ENCODE measurements at regions of chr6 and their contacts with region 1.

Region 1: GRCh38 chr6:72622094-72622940 is 453 bp downstream of the KCNQ5 start:
- DNase-seq: peak; percentile 85
- H3K4me3 Mint-ChIP-seq: peak overlapping the region; percentile 98
- H3K27ac Mint-ChIP-seq: peak overlapping the region; percentile 97
- H3K4me1 Mint-ChIP-seq: peaks cover 52% of the 10 kb centered on the region
- H3K27me3 Mint-ChIP-seq: no peaks in the 10 kb centered on the region

Region 2: GRCh38 chr6:72246926-72247325 is 375.4 kb before region 1 on chr6:
- intact Hi-C with region 1: no loop called
- DNase-seq: no peak
- H3K4me3 Mint-ChIP-seq: no peak overlapping the region
- H3K27ac Mint-ChIP-seq: no peak overlapping the region
- H3K4me1 Mint-ChIP-seq: no peaks in the 10 kb centered on the region
- H3K27me3 Mint-ChIP-seq: no peaks in the 10 kb centered on the region

Region 3: DNA sequence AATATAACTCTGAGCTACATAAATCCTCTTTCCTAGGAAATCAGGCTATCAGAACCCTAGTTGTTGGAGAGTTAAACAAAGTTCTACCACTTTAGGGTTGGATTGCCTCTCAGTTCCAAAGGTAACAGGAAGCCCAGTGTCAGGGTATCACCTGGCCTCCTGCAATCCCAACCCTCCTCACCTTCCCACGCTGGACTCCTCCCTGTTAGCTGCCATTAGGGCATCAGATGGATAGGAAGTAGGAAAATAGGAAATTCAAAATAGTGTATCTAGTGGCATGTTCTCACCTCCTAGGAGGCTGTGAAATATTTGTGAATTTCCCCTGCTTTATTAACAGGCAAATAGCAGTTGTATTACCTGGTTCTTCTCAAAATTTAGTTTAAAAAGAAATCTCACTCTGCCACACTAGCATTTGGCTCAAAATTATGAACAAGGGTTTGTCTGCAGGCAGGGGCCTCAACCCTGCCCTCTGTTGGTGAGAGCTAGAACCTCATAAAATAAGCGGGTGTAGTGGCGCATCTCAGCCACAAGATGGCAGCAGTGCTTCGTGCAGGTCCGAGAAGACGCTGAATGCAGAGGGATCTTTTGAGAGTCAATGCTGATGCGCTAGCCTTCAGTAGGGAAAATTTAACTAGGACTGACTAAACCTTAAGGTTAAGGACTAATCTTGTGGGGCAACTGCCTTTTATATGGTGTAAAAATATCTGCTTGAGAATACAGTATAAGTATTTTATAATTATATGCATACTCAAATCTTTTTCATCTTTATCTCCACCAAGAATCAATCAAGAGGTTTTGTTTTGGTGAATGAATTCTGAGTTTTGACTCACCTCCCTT is 210.2 kb before region 1 on chr6:
- intact Hi-C with region 1: loop called (anchors 2 kb)
- DNase-seq: peak; percentile 94
- H3K4me3 Mint-ChIP-seq: no peak overlapping the region
- H3K27ac Mint-ChIP-seq: no peak overlapping the region
- H3K4me1 Mint-ChIP-seq: no peaks in the 10 kb centered on the region
- H3K27me3 Mint-ChIP-seq: peaks cover 4% of the 10 kb centered on the region

Region 4: GRCh38 chr6:72683797-72684196 is 61.5 kb after region 1 on chr6:
- intact Hi-C with region 1: loop called (anchors 2 kb)
- DNase-seq: no peak
- H3K4me3 Mint-ChIP-seq: no peak overlapping the region
- H3K27ac Mint-ChIP-seq: peak overlapping the region; percentile 20
- H3K4me1 Mint-ChIP-seq: peaks cover 7% of the 10 kb centered on the region
- H3K27me3 Mint-ChIP-seq: no peaks in the 10 kb centered on the region

Region 5: DNA sequence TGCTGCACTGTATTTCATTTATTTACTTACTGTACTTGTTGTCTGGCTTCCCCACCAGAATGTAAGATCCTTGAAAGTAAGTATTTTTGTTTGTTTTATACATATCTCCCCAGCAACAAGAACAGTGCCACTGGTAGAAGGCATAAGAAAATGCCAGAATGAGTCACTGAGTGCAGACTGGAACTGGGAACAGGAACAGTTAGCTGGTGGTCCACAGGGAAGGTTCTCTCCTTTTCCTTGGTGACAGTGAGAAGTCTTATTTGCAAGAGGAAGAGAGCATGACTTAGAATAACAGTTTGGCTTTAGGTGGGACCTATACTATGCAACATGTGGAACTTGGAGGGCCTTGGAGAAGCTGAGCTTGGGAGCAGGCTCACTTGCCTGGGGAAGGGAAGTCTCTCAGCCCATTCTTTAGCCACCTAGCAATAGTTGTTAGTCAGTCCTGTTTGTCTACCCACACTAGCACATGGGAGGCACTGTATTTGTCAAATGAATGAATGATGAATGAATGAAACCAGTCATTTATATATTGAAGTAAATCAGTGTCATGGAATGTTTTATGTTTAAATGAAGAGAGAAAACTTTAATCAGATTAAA is 203.1 kb after region 1 on chr6:
- intact Hi-C with region 1: loop called (anchors 1 kb)
- DNase-seq: no peak
- H3K4me3 Mint-ChIP-seq: no peak overlapping the region
- H3K27ac Mint-ChIP-seq: peak overlapping the region; percentile 81
- H3K4me1 Mint-ChIP-seq: peaks cover 15% of the 10 kb centered on the region
- H3K27me3 Mint-ChIP-seq: no peaks in the 10 kb centered on the region

Region 6: DNA sequence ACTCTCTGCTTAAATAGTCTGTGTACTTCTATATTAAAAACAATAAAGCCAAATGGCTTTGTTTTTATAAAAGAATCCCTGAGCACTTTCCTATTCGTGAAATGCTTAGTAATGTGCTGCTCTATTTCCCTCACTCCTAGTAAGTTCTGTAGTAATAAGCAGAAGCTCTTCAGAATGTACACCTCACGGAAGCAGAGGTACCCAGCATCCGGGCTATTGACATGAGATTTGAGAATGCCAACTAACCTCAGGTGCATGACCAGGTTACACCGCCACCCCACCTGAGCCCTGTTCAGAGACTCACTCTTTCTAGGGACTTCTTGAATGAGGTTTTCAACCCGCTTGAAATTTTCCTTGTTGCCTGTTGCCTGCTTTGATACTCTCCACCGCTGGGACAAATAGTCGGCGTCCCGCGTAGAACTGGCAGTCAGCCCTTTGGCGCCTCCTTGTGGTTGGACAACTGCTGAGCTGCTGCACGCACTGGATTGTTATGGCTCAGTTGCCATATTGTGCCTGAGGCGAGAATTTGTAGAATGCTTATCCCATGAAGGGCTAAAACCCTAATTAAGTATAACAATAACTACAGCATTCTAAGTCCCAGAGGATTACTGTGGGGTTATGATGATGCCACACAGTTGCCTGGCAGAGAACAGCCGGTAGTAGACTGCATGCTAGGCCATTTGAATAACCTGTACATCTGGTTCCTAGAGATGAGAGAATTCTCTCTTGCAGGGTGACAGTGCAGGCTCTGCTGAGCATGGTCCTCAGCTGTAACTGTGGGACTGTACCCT is 507.5 kb after region 1 on chr6:
- intact Hi-C with region 1: loop called (anchors 1 kb)
- DNase-seq: peak; percentile 95
- H3K4me3 Mint-ChIP-seq: peak overlapping the region; percentile 18
- H3K27ac Mint-ChIP-seq: no peak overlapping the region
- H3K4me1 Mint-ChIP-seq: peaks cover 4% of the 10 kb centered on the region
- H3K27me3 Mint-ChIP-seq: peaks cover 3% of the 10 kb centered on the region

Region 7: DNA sequence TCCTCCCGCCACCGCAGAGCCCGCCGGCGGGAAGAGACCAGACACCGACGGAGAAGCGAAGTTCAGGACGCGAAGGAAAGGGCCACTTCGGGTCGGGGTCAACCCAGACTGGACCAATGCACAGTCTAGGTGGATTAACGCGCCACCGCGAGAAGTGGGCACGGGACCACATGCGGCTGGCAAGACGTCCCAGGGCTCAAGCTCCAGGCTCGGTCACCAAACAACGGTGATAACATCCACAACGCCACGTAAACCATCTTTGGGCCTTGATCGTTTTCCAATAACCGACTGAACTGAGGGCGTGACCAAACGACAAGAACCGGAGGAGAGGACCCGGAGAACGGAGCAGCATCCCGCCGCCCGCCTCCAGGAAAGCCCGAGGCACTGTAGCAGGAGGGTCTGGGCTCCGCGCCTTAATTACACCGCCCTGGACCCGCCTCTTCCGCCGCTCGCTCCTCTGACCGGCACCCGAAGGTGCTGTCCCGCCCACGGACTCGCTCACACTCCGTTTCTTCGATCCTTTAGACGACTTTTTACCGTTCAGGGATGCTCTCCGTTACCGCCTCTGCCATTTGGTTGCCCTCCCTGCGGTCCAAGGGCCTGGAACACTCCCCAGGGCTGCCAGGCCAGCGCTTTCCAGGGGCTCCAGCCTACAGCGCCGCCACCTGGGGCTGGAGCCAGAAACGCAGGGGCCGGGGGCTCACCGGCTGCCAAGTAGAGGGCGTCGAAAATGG is 687.6 kb after region 1 on chr6:
- intact Hi-C with region 1: loop called (anchors 5 kb)
- DNase-seq: peak; percentile 87
- H3K4me3 Mint-ChIP-seq: peak overlapping the region; percentile 98
- H3K27ac Mint-ChIP-seq: peak overlapping the region; percentile 87
- H3K4me1 Mint-ChIP-seq: peaks cover 27% of the 10 kb centered on the region
- H3K27me3 Mint-ChIP-seq: peaks cover 33% of the 10 kb centered on the region

Region 8: GRCh38 chr6:73520688-73521350 is 898.5 kb after region 1 on chr6 and contains the start of gene EEF1A1:
- intact Hi-C with region 1: loop called (anchors 2 kb)
- DNase-seq: peak; percentile 99
- H3K4me3 Mint-ChIP-seq: peak within 1 kb of the TSS; percentile 97
- H3K27ac Mint-ChIP-seq: peak within 1 kb of the TSS; percentile 100
- H3K4me1 Mint-ChIP-seq: peaks cover 45% of the 10 kb centered on the region
- H3K27me3 Mint-ChIP-seq: peaks cover 10% of the 10 kb centered on the region
- total RNA-seq, gene EEF1A1: 9,514 and 9,634 TPM in 2 replicates

Measured in activated CD4-positive, alpha-beta T cell treated with anti-CD3 and anti-CD28 coated beads, Interleukin-2, amount 10 ng/mL, durations not matched to agents 24 days and 14 days (primary cell).